Ovary (tissue), 10 donors: ENCODE measurements at regions of chr11 and their contacts with region 1.

Region 1: DNA sequence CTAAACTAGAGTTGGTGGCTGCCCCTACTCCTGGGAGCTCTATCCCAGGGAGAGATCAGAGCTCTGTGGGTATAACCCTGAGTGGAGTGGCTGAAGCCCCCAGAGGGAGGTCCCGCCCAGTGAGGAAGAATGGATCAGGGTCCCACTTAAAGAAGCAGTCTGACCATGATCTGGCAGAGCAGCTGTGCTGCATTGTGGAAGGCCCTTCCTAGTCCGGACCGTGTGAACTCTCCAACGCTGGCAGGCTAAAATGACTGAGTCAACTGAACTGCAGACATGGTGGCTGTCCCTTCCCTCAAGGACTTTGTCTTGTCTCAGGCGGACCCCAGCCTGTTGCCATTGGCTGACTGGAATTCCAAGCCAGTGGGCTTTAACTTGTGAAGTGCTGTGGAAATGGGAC is 494.2 kb downstream of the FAM181B start:
- DNase-seq: no peak
- H3K4me3 ChIP-seq: no peak overlapping the region
- H3K27ac ChIP-seq: no peak overlapping the region
- H3K4me1 ChIP-seq: no peaks in the 10 kb centered on the region
- H3K27me3 ChIP-seq: no peaks in the 10 kb centered on the region
- CTCF ChIP-seq: no peak
- EP300 ChIP-seq: no peak
- POLR2A ChIP-seq: no peak

Region 2: DNA sequence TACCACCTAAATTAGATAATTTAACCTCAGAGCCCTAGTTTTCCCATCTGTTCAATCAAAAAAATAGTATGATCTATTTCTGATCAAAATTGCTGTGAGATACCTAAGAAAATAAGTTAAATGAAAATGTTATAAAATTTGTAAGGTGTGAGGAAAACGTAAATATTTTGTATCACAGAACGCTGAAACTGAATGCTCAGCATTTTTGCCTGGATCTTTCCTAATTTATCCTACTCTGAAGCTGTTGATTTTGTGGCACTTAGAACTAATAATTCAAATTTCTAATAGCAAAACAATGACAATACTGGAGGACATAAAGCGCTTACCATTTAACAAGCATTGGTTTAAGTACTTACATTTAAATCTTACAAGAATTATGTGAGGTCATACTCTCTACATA is 180.0 kb before region 1 on chr11:
- intact Hi-C with region 1: loop called in 1 of 4 experiments (anchors 5 kb)
- DNase-seq: no peak
- H3K4me3 ChIP-seq: no peak overlapping the region
- H3K27ac ChIP-seq: no peak overlapping the region
- H3K4me1 ChIP-seq: no peaks in the 10 kb centered on the region
- H3K27me3 ChIP-seq: no peaks in the 10 kb centered on the region
- CTCF ChIP-seq: no peak
- EP300 ChIP-seq: no peak
- POLR2A ChIP-seq: no peak

Region 3: GRCh38 chr11:82080160-82080559 is 159.3 kb before region 1 on chr11:
- intact Hi-C with region 1: no loop called
- DNase-seq: no peak
- H3K4me3 ChIP-seq: no peak overlapping the region
- H3K27ac ChIP-seq: no peak overlapping the region
- H3K4me1 ChIP-seq: no peaks in the 10 kb centered on the region
- H3K27me3 ChIP-seq: no peaks in the 10 kb centered on the region
- CTCF ChIP-seq: no peak
- EP300 ChIP-seq: no peak
- POLR2A ChIP-seq: no peak